Tibial artery (tissue), 4 donors: ENCODE measurements at regions of chr19 and their contacts with region 1.

Region 1: GRCh38 chr19:19531951-19532805 is 3.5 kb downstream of the YJEFN3 start:
- DNase-seq: peak; percentile 82 to 88
- H3K4me3 ChIP-seq: no peak overlapping the region
- H3K27ac ChIP-seq: no peak overlapping the region
- H3K4me1 ChIP-seq: peaks cover 0 to 17% (median 13%) of the 10 kb centered on the region in 4 donors
- H3K27me3 ChIP-seq: peaks cover 0 to 1% of the 10 kb centered on the region in 2 donors
- CTCF ChIP-seq: peak; percentile 90 to 96

Region 2: DNA sequence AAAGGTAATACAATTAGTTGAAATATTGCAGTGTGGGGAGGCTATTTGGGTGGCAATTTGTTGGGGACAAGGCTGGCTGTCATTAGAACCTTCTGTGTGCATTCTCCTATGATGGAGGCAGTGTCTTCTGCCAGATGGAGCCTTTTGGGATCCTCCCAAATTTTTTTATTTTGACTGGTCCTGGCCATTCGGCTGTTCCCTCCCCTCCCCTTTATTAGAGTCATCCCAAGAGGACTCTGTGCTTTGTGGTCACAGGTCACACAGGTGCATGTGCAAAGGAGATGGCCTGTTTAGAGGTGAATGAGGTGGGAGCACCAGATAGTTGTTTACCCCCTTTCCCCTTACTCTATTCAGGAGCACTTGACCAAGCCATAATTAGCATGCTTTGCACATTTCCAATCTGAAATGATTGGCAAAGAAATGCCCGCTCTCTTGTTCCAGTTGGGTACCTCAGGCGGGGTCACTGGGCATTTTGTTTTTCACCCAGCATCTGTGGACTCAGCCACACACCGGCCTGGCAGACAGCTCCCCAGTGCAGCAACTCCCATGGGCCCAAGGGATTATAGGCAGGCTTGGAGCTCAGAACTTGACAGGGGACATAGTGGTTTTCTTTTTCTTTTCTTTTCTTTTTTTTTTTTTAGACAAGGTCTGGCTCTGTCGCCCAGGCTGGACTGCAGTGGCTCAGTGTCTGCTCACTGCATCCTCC is 106.9 kb before region 1 on chr19:
- intact Hi-C with region 1: no loop called
- DNase-seq: no peak
- H3K4me3 ChIP-seq: no peak overlapping the region
- H3K27ac ChIP-seq: no peak overlapping the region
- H3K4me1 ChIP-seq: peaks cover 0 to 68% (median 46%) of the 10 kb centered on the region in 4 donors
- H3K27me3 ChIP-seq: no peaks in the 10 kb centered on the region
- CTCF ChIP-seq: no peak

Region 3: DNA sequence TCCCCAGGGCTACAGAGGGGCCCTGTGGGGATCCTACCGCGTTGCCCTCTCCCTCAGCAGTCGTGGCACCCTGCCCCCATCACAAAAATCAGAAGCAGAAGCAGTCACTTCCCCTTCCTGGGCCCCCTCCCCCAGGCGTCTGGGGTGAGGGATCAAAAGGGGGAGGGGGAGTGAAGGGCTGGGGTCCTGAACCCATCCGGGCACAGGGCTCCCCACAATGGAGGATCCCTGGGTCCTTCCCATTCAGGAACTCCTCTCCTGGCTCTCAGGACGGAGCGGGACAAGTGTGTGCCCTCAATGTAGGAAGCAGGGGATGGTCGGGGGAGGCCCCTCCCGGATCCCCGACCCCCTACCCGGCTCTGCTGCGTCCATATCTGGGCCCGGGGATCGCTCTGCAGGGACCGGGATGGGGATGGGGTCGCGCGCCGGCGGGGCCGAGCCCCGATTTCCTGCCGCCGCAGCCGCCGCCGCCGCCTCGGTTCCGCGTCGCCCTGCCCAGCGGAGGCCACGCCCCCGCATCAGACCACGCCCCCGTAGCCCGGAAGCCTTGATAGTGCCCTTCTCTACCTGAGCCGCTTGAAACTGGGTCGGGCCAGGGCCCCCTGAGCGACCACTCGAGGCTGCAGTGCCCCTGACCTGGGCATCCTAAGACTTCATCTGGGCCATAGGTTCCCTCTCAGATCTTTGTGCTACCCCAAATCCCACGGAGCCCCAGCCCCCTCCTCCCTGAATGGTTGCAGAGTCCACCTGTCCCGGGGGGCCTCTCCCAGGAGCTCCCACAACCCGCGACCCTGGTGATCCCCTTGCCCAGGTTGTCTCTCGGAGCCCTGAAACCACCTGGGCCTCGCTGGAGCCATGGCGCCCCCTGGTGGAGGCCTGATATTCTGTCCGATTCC is 111.2 kb after region 1 on chr19 and contains the start of gene GMIP:
- intact Hi-C with region 1: loop called (anchors 5 kb)
- DNase-seq: peak; percentile 55 to 84
- H3K4me3 ChIP-seq: peak within 1 kb of the TSS; percentile 60 to 74
- H3K27ac ChIP-seq: peak within 1 kb of the TSS; percentile 49 to 56
- H3K4me1 ChIP-seq: peaks cover 0 to 14% (median 8%) of the 10 kb centered on the region in 4 donors
- H3K27me3 ChIP-seq: no peaks in the 10 kb centered on the region
- CTCF ChIP-seq: peak; percentile 82 to 90

Region 4: DNA sequence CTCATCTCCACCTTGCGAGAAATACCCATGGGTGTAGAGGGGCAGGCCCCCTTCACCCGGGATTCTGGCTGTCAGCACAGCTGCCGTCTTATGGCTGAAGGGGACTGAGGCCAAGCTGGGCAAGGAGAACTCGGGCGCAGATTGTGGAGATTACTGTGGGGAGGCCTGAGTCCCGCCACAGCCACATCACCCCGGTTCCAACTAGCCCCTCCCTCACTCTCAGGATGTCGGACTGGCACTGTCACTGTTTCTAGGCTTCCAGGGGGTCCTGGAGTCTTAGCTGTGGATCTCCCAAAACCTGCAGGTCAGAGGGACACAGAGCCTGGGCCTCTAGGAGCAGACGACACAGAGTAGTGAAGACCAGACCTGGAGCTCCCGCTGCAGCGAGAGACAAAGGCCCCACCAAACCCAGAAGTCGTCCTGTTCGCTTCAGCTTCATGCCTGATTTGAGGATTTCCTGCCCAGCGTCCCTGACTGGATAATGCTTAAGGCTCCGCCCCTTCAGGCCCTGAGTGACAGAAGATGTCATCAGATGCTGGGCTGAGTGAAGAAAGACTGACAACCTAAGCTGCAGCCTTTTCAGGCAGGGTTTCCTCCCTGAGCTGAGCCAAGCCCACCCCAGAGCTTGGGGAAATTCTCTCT is 424.4 kb after region 1 on chr19:
- intact Hi-C with region 1: loop called (anchors 10 kb)
- DNase-seq: no peak
- H3K4me3 ChIP-seq: no peak overlapping the region
- H3K27ac ChIP-seq: no peak overlapping the region
- H3K4me1 ChIP-seq: no peaks in the 10 kb centered on the region
- H3K27me3 ChIP-seq: no peaks in the 10 kb centered on the region
- CTCF ChIP-seq: no peak